Mammary epithelial cell (primary cell): ENCODE measurements at regions of chr19 and their contacts with region 1.

Region 1: DNA sequence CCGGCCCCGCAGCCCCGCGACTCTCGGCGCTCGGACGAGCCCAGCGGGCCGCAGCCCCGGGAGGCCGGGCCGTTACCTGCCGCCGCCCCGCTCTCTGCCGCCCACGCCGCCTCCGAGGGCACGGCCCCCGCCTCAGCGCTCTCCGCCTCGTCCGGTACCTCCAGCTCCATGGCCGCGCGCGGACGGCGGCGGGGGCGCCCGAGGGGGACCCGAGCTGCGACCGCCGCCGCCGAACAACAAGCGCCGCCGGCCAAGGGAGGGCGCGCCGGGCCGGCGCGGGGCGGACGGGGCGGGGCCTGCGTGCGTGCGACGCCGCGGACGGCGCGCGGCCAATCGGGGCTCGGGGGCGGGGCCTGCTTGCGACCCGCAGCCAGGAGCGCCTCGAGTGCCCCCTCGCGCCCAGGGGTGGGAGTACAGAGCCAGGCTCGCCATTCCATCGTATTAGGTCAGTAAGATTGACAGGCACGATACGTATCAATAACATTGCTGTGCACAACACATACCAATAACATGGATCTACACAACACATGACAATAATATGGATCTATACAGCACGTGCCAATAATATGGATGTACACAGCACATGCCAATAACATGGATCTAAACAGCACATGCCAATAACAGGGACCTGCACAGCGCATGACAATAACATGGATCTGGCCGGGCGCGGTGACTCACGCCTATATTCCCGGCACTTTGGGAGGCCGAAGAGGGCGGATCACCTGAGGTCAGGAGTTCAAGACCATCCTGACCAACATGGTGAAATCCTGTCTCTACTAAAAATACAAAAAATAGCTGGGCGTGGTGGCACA is at the start of gene PIP5K1C:
- DNase-seq: peak; percentile 73
- H3K4me3 ChIP-seq: peak within 1 kb of the TSS; percentile 55 to 97 (median 87)
- H3K27ac ChIP-seq: peak within 1 kb of the TSS; percentile 37
- H3K4me1 ChIP-seq: no peaks in the 10 kb centered on the region
- H3K27me3 ChIP-seq: no peaks in the 10 kb centered on the region
- CTCF ChIP-seq: peak; percentile 66 to 79
- total RNA-seq, gene PIP5K1C: 22.5 to 26.7 TPM

Region 2: DNA sequence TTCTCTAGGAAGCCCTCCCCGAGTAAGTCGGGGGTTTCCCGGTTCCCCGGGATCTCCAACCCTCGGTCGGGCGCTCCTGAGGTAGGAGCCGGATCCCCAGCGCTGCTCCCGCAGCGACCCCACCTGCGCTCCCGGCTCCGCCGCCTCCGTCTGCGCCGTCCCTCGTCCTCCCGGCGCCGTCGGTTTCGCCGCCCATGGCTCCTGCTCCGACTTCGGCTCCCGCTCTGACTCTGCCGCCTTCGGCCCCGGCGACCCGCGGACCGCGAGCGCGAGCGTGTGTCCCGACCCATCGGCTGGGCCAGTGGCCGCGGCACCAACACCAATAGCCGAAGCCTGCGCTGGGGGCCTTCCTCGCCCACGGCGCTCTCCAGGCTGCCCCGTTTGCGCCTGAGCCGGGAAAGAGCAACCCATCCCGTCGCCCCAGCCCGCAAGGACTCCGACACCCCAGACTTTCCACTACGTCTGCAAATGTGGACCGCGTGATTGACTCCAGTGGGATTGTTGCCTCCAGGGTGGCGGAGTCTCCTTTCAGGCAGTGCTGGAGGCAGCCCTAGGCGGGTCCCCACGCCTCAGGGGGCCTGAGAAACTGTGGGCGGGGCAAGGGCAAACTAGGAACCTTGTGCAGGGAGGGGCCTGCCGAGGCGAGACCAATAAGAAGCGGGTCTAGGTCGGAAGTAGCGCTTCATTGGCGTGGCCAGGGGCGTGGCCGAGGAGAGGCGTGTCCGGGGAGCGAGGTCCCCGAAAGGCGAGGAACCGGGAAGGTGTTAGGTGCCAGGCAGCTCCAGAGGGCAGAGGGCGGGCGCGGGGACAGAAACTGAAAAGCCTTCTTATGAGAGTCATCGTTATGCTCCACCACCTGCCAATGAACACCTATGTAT is 73.7 kb before region 1 on chr19 and contains the start of gene CACTIN:
- CTCF ChIA-PET with region 1: no interaction called
- dilution Hi-C with region 1: no loop called
- in situ Hi-C with region 1: no loop called
- intact Hi-C with region 1: loop called (anchors 2 kb)
- DNase-seq: peak; percentile 96
- H3K4me3 ChIP-seq: peak within 1 kb of the TSS; percentile 69 to 98 (median 91)
- H3K27ac ChIP-seq: peak within 1 kb of the TSS; percentile 75
- H3K4me1 ChIP-seq: peaks cover 13% of the 10 kb centered on the region
- H3K27me3 ChIP-seq: no peaks in the 10 kb centered on the region
- CTCF ChIP-seq: no peak
- total RNA-seq, gene CACTIN: 16.0 to 26.5 TPM

Region 3: DNA sequence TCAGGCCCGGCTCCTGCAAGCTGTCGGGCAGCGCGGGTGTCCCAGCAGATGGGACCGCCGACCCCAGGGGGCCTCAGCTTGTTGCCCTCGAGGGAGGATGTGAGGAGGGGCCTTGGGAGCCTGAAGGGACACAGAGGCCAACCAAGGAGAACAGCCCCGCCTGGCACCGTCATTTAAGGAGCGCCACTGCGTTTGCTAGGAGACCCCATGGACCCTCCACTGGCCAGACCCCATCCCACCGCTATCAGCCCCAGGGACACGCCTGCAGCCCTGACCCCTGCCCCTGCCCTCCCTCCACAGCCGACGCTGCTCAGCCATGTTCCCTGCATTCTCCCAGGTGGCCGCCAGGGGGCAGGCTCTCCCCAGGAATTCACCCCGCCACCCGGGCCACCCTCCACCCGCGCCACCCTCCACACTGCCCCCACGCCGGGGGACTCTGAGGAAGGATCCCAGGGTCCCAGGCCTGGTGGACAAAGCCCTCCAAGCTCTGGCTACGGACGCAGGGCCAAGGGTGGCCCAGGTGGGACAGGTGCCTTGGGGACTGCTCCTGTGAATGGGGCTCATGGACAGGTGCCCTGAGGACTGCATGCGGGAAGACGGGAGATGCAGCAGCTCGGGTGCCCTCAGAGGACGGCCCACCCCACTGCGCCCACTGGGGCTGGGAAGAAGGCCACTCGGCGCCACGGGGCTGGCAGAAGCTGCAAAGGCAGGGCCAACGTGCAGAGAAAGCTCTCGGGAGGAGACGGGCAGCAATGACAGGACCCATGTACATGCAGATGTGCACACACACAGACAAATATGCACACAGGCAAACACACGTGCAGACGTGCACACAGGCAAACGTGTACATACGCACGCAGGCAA is 34.5 kb before region 1 on chr19:
- CTCF ChIA-PET with region 1: interaction called, 4 read pairs
- dilution Hi-C with region 1: no loop called
- in situ Hi-C with region 1: no loop called
- intact Hi-C with region 1: loop called (anchors 1 kb)
- DNase-seq: peak; percentile 14
- H3K4me3 ChIP-seq: no peak overlapping the region
- H3K27ac ChIP-seq: no peak overlapping the region
- H3K4me1 ChIP-seq: peaks cover 22% of the 10 kb centered on the region
- H3K27me3 ChIP-seq: no peaks in the 10 kb centered on the region
- CTCF ChIP-seq: peak; percentile 72 to 90